ENCODE measurements at regions of chr7 and their contacts with region 1.

Region 1: GRCh38 chr7:138002096-138002827 is 376 bp upstream of the CREB3L2 start:
- DNase-seq: peak; percentile 92 to 99 (median 96)
- ATAC-seq: peak; percentile 87 to 93 (median 90)
- H3K4me3 ChIP-seq: peak overlapping the region; percentile 93 to 95
- H3K4me3 Mint-ChIP-seq: peak overlapping the region; percentile 94 to 97 (median 95)
- H3K27ac ChIP-seq: peak overlapping the region; percentile 77
- H3K27ac Mint-ChIP-seq: peak overlapping the region; percentile 87 to 90
- H3K4me1 ChIP-seq: peaks cover 5 to 17% of the 10 kb centered on the region in 2 experiments
- H3K4me1 Mint-ChIP-seq: peaks cover 34 to 45% (median 35%) of the 10 kb centered on the region in 3 donors
- H3K27me3 ChIP-seq: no peaks in the 10 kb centered on the region
- H3K27me3 Mint-ChIP-seq: no peaks in the 10 kb centered on the region

Region 2: GRCh38 chr7:137898839-137899721 is 103.2 kb before region 1 on chr7:
- CTCF ChIA-PET with region 1: interaction called, 163 to 207 read pairs
- POLR2A ChIA-PET with region 1: no interaction called
- DNase-seq: peak; percentile 33 to 81 (median 68)
- ATAC-seq: peak; percentile 92 to 96 (median 94)
- H3K4me3 ChIP-seq: peak overlapping the region in 1 of 2 donors; percentile 57
- H3K4me3 Mint-ChIP-seq: peak overlapping the region; percentile 36 to 63 (median 41)
- H3K27ac ChIP-seq: no peak overlapping the region
- H3K27ac Mint-ChIP-seq: peak overlapping the region; percentile 63 to 82
- H3K4me1 ChIP-seq: peaks cover 6 to 12% of the 10 kb centered on the region in 2 experiments
- H3K4me1 Mint-ChIP-seq: peaks cover 17 to 22% (median 19%) of the 10 kb centered on the region in 3 donors
- H3K27me3 ChIP-seq: no peaks in the 10 kb centered on the region
- H3K27me3 Mint-ChIP-seq: no peaks in the 10 kb centered on the region

Region 3: GRCh38 chr7:137943147-137943551 is 59.1 kb before region 1 on chr7:
- CTCF ChIA-PET with region 1: interaction called, 3 to 12 read pairs
- POLR2A ChIA-PET with region 1: no interaction called
- DNase-seq: no peak
- ATAC-seq: no peak
- H3K4me3 ChIP-seq: no peak overlapping the region
- H3K4me3 Mint-ChIP-seq: no peak overlapping the region
- H3K27ac ChIP-seq: no peak overlapping the region
- H3K27ac Mint-ChIP-seq: no peak overlapping the region
- H3K4me1 ChIP-seq: no peaks in the 10 kb centered on the region
- H3K4me1 Mint-ChIP-seq: peaks cover 0 to 3% (median 0%) of the 10 kb centered on the region in 3 donors
- H3K27me3 ChIP-seq: no peaks in the 10 kb centered on the region
- H3K27me3 Mint-ChIP-seq: no peaks in the 10 kb centered on the region

Region 4: GRCh38 chr7:138151731-138152577 is 149.7 kb after region 1 on chr7:
- CTCF ChIA-PET with region 1: no interaction called
- POLR2A ChIA-PET with region 1: no interaction called
- DNase-seq: no peak
- ATAC-seq: no peak
- H3K4me3 ChIP-seq: no peak overlapping the region
- H3K4me3 Mint-ChIP-seq: no peak overlapping the region
- H3K27ac ChIP-seq: no peak overlapping the region
- H3K27ac Mint-ChIP-seq: no peak overlapping the region
- H3K4me1 ChIP-seq: peaks cover 0 to 2% of the 10 kb centered on the region in 2 experiments
- H3K4me1 Mint-ChIP-seq: peaks cover 3 to 5% (median 4%) of the 10 kb centered on the region in 3 donors
- H3K27me3 ChIP-seq: peaks cover 0 to 13% of the 10 kb centered on the region in 2 experiments
- H3K27me3 Mint-ChIP-seq: peaks cover 4 to 11% of the 10 kb centered on the region in 2 donors